HepG2 (cell line): ENCODE measurements at regions of chr2 and their contacts with region 1.

Region 1: GRCh38 chr2:20962939-20963557 is 80.8 kb downstream of the APOB start:
- DNase-seq: peak; percentile 59
- ATAC-seq: peak; percentile 91
- H3K4me3 ChIP-seq: no peak overlapping the region
- H3K27ac ChIP-seq: no peak overlapping the region
- H3K4me1 ChIP-seq: no peaks in the 10 kb centered on the region
- H3K27me3 ChIP-seq: peaks cover 1 to 18% of the 10 kb centered on the region in 2 experiments; a peak in 3 of 5 replicates
- CTCF ChIP-seq: peak; percentile 95
- EP300 ChIP-seq: no peak; a peak in 1 of 4 replicates
- POLR2A ChIP-seq: no peak
- RAD21 ChIP-seq: peak; percentile 86

Region 2: GRCh38 chr2:20661067-20661980 is 301.7 kb before region 1 on chr2:
- CTCF ChIA-PET with region 1: interaction called, 28 read pairs
- POLR2A ChIA-PET with region 1: no interaction called
- in situ Hi-C with region 1: loop called (anchors 25 kb)
- intact Hi-C with region 1: loop called (anchors 1 kb)
- DNase-seq: peak; percentile 78
- ATAC-seq: peak; percentile 38
- H3K4me3 ChIP-seq: peak overlapping the region in 1 of 3 experiments; percentile 15; a peak in 1 of 6 replicates
- H3K27ac ChIP-seq: no peak overlapping the region
- H3K4me1 ChIP-seq: peaks cover 38% of the 10 kb centered on the region
- H3K27me3 ChIP-seq: peaks cover 26 to 66% of the 10 kb centered on the region in 2 experiments; a peak in 4 of 5 replicates
- CTCF ChIP-seq: peak; percentile 99
- EP300 ChIP-seq: no peak
- POLR2A ChIP-seq: no peak
- RAD21 ChIP-seq: peak; percentile 97

Region 3: GRCh38 chr2:20682167-20682920 is 280.7 kb before region 1 on chr2:
- CTCF ChIA-PET with region 1: interaction called, 15 read pairs
- POLR2A ChIA-PET with region 1: no interaction called
- in situ Hi-C with region 1: no loop called
- intact Hi-C with region 1: loop called (anchors 1 kb)
- DNase-seq: peak; percentile 47
- ATAC-seq: peak; percentile 43
- H3K4me3 ChIP-seq: no peak overlapping the region
- H3K27ac ChIP-seq: no peak overlapping the region
- H3K4me1 ChIP-seq: peaks cover 31% of the 10 kb centered on the region
- H3K27me3 ChIP-seq: no peaks in the 10 kb centered on the region
- CTCF ChIP-seq: peak; percentile 82
- EP300 ChIP-seq: no peak
- POLR2A ChIP-seq: no peak
- RAD21 ChIP-seq: peak; percentile 82

Region 4: DNA sequence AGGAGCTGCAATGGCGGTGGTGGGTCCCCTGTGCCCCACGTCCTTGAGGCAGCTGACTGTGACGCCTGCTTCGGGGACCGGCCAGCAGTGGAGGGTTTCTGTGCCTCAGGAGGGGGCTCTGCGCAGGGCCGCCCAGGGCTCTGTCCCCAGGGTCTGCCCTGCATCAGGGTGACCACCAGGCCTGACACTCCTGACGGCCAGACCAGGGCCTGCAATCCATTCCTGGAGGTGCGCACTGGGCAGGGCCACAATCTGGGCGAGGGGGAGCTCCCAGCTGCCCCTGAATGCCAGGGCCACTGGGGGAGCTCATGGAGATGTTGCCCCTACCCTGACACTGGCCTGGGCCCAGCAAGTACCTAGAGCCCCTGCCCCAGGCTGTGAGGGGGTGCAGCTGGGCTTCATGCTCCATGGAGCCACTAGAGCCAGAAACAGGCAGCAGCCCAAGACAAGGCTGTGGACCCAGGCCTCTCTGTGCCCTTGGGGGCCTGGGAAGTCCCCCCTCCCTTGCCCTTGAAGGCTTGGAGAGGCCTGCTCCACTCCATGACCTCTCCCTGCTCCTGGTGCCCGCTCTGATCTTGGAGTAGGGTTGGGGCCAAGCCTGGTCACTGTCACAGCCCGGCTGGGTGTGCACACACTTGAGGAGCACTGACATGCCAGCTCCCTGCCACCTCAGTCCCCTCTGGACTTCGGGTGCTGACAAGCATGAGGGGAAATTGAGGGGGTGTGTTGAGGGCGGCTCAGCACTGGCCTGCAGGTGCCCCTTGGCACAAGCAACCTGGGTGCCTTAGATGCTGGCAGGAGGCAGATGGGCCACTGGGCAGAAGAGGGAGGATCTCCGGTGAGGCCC is 196.0 kb before region 1 on chr2:
- CTCF ChIA-PET with region 1: no interaction called
- POLR2A ChIA-PET with region 1: no interaction called
- in situ Hi-C with region 1: loop called (anchors 5 kb)
- intact Hi-C with region 1: no loop called
- DNase-seq: no peak
- ATAC-seq: peak; percentile 54
- H3K4me3 ChIP-seq: no peak overlapping the region
- H3K27ac ChIP-seq: no peak overlapping the region
- H3K4me1 ChIP-seq: no peaks in the 10 kb centered on the region
- H3K27me3 ChIP-seq: no peaks in the 10 kb centered on the region
- CTCF ChIP-seq: no peak
- EP300 ChIP-seq: no peak
- POLR2A ChIP-seq: no peak
- RAD21 ChIP-seq: no peak

Region 5: DNA sequence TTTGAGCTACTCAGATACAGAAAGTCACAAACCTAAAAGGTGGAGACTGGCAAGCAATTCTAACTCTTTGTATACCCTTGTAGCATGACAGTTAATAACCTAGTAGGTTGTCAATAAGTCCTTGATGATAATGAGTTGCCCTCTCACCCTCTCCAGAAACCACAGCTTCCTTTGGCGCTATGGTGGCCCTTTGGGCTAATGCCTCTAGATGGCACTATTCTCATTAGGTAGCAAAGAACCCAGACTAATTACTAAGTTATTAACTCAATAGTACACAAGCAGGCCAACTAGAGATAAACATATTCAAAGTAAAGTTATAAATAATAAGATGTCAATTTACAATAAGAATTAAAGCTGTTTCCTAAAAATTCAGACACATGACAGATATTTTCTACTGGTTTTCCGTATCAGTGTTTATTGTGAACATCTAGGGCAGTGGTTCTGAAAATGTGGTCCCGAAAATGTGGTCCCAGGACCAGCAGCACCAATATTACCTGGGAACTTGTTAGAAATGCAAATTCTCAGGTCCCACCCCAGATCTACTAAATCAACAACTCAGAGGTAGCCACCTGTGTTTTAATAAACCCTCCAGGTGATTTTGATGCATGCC is 181.3 kb before region 1 on chr2:
- CTCF ChIA-PET with region 1: interaction called, 25 read pairs
- POLR2A ChIA-PET with region 1: no interaction called
- in situ Hi-C with region 1: no loop called
- intact Hi-C with region 1: loop called (anchors 1 kb)
- DNase-seq: peak; percentile 51
- ATAC-seq: peak; percentile 92
- H3K4me3 ChIP-seq: no peak overlapping the region
- H3K27ac ChIP-seq: no peak overlapping the region
- H3K4me1 ChIP-seq: no peaks in the 10 kb centered on the region
- H3K27me3 ChIP-seq: no peaks in the 10 kb centered on the region
- CTCF ChIP-seq: peak; percentile 80
- EP300 ChIP-seq: no peak
- POLR2A ChIP-seq: no peak
- RAD21 ChIP-seq: peak; percentile 78

Region 6: GRCh38 chr2:20916604-20917286 is 46.3 kb before region 1 on chr2:
- CTCF ChIA-PET with region 1: no interaction called
- POLR2A ChIA-PET with region 1: no interaction called
- in situ Hi-C with region 1: no loop called
- intact Hi-C with region 1: loop called (anchors 5 kb)
- DNase-seq: peak; percentile 74
- ATAC-seq: peak; percentile 94
- H3K4me3 ChIP-seq: peak overlapping the region in 1 of 3 experiments; percentile 31; a peak in 2 of 6 replicates
- H3K27ac ChIP-seq: no peak overlapping the region
- H3K4me1 ChIP-seq: peaks cover 14% of the 10 kb centered on the region
- H3K27me3 ChIP-seq: peaks cover 0 to 22% of the 10 kb centered on the region in 2 experiments; a peak in 4 of 5 replicates
- CTCF ChIP-seq: peak; percentile 88
- EP300 ChIP-seq: no peak
- POLR2A ChIP-seq: no peak
- RAD21 ChIP-seq: peak; percentile 70

Region 7: GRCh38 chr2:21165350-21165749 is 202.3 kb after region 1 on chr2:
- CTCF ChIA-PET with region 1: interaction called, 6 read pairs
- POLR2A ChIA-PET with region 1: no interaction called
- in situ Hi-C with region 1: no loop called
- intact Hi-C with region 1: loop called (anchors 2 kb)
- DNase-seq: peak; percentile 42
- ATAC-seq: 0 out of 3 replicates have a peak, but pooled peaks have one; percentile 36
- H3K4me3 ChIP-seq: no peak overlapping the region
- H3K27ac ChIP-seq: no peak overlapping the region
- H3K4me1 ChIP-seq: no peaks in the 10 kb centered on the region
- H3K27me3 ChIP-seq: no peaks in the 10 kb centered on the region
- CTCF ChIP-seq: peak; percentile 57
- EP300 ChIP-seq: no peak
- POLR2A ChIP-seq: no peak
- RAD21 ChIP-seq: peak; percentile 40; the same call in 1 of the 2 replicates